Activated T-helper 1 cell treated with anti-CD3 and anti-CD28 coated beads, Interleukin-12 subunit alpha, Interleukin-12 subunit beta, Interleukin-2, Interleukin-4 antibody, amounts not matched to agents 30 ng/mL and 10 ng/mL and 1 ng/mL, durations not matched to agents 14 hours and 24 hours and 36 hours (primary cell): ENCODE measurements at regions of chr15 and their contacts with region 1.

Region 1: GRCh38 chr15:67101911-67102598 is 36.7 kb downstream of the SMAD3 start:
- DNase-seq: peak; percentile 64
- H3K4me3 Mint-ChIP-seq: no peak overlapping the region
- H3K27ac Mint-ChIP-seq: no peak overlapping the region
- H3K4me1 Mint-ChIP-seq: peaks cover 51% of the 10 kb centered on the region
- H3K27me3 Mint-ChIP-seq: no peaks in the 10 kb centered on the region

Region 2: DNA sequence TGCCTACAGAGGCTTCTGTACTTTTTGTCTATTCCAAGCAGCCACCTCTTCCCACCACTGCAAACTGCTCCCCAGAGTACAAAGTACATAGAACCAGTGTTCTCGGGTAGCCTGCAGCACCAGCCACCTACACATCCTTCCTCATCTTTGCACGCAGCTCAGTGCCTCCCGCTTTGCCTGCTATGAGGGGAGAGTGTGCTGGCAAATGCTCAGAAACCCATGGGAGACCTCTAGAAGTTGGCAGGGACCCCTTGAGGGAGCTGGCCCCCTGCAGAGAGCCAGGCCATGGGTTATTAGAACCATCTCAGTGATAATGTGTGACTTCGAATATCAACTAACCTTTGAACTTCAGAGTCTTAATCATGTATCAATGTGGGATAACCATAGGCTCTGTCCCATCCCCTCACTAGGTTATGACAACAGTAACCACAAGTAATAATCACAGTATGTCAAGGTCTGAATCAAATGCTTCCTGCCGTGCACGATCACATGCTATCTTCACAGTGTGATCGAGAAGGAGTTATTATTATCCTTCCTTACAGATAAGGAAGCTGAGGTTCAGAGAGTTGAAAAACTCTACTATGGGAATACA is 59.4 kb before region 1 on chr15:
- intact Hi-C with region 1: no loop called
- DNase-seq: no peak
- H3K4me3 Mint-ChIP-seq: no peak overlapping the region
- H3K27ac Mint-ChIP-seq: no peak overlapping the region
- H3K4me1 Mint-ChIP-seq: peaks cover 15% of the 10 kb centered on the region
- H3K27me3 Mint-ChIP-seq: no peaks in the 10 kb centered on the region

Region 3: GRCh38 chr15:67065444-67066093 is 36.5 kb before region 1 on chr15 and contains the start of gene SMAD3:
- intact Hi-C with region 1: loop called (anchors 1 kb)
- DNase-seq: peak; percentile 81
- H3K4me3 Mint-ChIP-seq: peak within 1 kb of the TSS; percentile 100
- H3K27ac Mint-ChIP-seq: peak within 1 kb of the TSS; percentile 95
- H3K4me1 Mint-ChIP-seq: peaks cover 65% of the 10 kb centered on the region
- H3K27me3 Mint-ChIP-seq: peaks cover 3% of the 10 kb centered on the region
- total RNA-seq, gene SMAD3: 80.2 and 80.4 TPM in 2 replicates

Region 4: DNA sequence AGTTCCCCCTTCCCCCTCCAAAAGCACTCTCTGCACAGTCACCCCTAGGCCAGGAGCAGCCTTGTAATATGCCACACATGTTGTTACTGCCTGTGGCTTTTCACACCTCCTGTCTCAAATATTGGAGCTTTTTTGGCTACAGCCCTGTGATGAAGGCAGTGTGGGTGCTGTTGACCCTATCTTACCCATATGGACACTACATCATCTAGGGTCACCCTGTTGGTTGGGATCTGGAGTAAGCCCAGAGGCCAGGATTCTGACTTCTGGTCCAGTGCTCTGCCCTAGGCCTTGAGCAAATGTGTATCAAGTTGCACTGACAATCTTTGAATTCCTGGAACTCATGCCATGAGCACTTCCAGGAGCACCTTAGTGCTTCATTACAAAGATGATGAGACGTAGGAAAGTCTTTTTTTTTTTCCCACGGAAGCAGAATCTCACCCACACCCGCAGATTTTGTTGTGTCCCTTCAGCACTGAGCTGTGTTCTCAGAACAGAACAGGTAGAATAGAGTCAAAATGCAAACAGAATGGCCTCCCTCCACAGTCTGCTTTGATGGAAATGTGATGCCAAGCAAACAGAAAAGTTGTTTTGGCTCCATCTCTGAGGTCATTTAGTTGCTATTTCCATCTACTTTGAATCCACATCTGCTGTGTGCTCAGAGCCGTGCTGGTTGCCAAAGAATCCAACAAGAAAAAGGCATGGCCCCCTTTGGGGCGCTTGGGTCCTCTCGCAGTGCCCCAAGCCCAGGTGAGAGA is 13.0 kb after region 1 on chr15:
- intact Hi-C with region 1: loop called (anchors 1 kb)
- DNase-seq: no peak
- H3K4me3 Mint-ChIP-seq: peak overlapping the region; percentile 38
- H3K27ac Mint-ChIP-seq: peak overlapping the region; percentile 97
- H3K4me1 Mint-ChIP-seq: peaks cover 95% of the 10 kb centered on the region
- H3K27me3 Mint-ChIP-seq: no peaks in the 10 kb centered on the region

Region 5: DNA sequence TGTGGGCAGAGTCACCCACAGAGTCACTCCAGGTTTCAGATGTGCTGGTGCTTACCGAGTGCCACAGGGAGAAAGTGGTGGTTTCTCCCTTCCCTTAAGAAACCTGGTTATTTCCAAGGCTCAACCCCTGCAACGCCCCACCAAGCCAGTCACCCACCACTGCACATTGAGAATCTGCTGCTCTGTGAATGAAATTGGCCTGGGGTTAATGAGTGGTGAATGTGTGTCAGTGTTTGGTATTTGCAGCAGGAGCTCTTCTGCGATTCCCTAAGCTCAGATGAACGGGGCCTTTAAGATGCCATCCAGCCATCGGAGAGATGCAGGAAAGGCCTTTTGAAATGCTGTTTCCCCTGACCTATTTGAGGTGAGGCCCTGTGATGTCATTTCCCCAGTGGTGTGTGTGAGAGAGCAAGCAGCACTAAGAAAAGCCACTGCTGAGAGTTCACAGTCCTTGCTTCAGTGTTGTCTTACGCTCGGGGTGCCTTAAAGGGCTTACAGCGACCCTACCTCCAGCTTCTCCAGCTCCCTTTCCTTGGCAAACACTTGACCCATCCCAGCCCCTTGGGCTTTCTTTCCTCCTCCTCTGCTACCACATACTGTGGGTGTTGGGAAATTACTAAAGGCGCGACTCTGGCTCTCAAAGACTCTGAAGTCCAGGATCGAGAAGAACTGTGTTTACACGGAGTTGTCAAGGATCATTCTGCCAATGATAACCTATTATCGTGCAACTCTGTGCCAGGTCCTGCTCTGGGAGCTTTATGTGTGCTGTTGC is 32.2 kb after region 1 on chr15:
- intact Hi-C with region 1: loop called (anchors 1 kb)
- DNase-seq: peak; percentile 69
- H3K4me3 Mint-ChIP-seq: peak overlapping the region; percentile 86
- H3K27ac Mint-ChIP-seq: peak overlapping the region; percentile 98
- H3K4me1 Mint-ChIP-seq: peaks cover 100% of the 10 kb centered on the region
- H3K27me3 Mint-ChIP-seq: no peaks in the 10 kb centered on the region

Region 6: DNA sequence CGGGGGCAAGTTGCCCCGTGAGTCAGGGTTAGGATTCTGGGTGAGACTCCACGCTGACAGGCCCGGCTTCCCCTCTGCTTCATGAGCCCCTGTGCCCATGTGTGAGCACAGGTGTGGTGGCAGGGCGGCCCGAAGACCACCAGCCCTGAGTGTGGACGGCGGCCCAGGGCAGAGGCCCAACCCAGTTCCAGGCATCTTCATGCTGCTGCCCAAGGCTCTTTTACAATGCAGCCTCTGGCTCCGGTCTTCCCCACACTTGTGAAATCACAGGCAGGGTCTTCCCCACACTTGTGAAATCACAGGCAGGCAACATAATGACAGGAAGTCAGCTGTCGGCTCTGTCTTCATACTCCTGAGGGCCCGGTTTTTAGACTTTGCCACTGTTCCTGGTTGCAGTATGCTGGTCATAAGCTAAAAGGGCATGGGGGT is 73.6 kb after region 1 on chr15:
- intact Hi-C with region 1: loop called (anchors 2 kb)
- DNase-seq: no peak
- H3K4me3 Mint-ChIP-seq: peak overlapping the region; percentile 31
- H3K27ac Mint-ChIP-seq: peak overlapping the region; percentile 83
- H3K4me1 Mint-ChIP-seq: peaks cover 82% of the 10 kb centered on the region
- H3K27me3 Mint-ChIP-seq: no peaks in the 10 kb centered on the region

Region 7: GRCh38 chr15:67510597-67511225 is 408.7 kb after region 1 on chr15:
- intact Hi-C with region 1: no loop called
- DNase-seq: no peak
- H3K4me3 Mint-ChIP-seq: no peak overlapping the region
- H3K27ac Mint-ChIP-seq: no peak overlapping the region
- H3K4me1 Mint-ChIP-seq: peaks cover 5% of the 10 kb centered on the region
- H3K27me3 Mint-ChIP-seq: peaks cover 2% of the 10 kb centered on the region